Transverse colon (tissue), 4 donors: ENCODE measurements at regions of chr19 and their contacts with region 1.

Region 1: DNA sequence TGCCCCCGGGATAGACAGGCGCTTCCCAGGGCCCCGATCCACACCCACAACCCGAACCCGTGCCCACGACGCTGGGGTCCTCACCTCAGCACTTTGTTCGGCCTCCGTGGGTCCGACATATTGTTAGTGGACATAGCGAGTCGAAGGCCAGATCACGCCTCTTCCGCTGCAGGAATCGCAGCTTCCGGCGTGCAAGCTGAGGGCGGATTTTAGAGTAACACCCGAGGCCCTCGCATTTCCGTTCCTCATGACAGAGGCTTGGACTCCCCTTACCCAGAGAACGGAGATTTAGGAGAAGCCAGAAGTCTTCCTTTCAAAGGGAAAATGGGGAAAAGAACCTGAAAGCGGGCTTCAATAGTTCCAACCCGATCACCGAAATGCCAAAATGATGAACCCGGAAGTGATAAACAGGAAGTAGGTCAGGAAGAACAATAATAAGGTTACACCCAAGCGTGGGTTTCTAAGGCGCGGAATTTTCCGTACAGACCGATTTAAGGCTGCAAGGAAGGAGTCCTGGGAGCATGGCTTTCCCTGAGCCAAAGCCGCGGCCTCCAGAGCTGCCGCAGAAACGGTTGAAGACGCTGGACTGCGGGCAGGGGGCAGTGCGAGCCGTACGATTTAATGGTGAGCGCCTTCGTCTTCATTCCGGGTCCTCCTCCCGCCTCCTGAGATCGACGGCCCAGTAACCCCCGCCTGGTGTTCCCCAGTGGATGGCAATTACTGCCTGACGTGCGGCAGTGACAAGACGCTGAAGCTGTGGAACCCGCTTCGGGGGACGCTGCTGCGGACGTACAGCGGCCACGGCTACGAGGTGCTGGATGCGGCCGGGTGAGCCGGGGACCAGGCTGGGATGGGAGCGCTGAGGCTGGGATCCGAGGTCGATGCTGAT is 2.9 kb downstream of the WDR83 start:
- DNase-seq: peak; percentile 81
- H3K4me3 ChIP-seq: peak overlapping the region; percentile 66 to 90 (median 72)
- H3K27ac ChIP-seq: peak overlapping the region; percentile 90 to 95 (median 92)
- H3K4me1 ChIP-seq: peaks cover 19 to 45% (median 36%) of the 10 kb centered on the region in 4 donors
- H3K27me3 ChIP-seq: no peaks in the 10 kb centered on the region
- CTCF ChIP-seq: peak in 1 of 5 experiments; percentile 13
- EP300 ChIP-seq: no peak
- POLR2A ChIP-seq: peak; percentile 47

Region 2: GRCh38 chr19:12156223-12157058 is 513.1 kb before region 1 on chr19 and contains the start of gene ZNF625:
- in situ Hi-C with region 1: no loop called
- intact Hi-C with region 1: loop called (anchors 5 kb)
- DNase-seq: peak; percentile 83
- H3K4me3 ChIP-seq: peak within 1 kb of the TSS; percentile 64 to 91 (median 66)
- H3K27ac ChIP-seq: peak within 1 kb of the TSS; percentile 69 to 87 (median 74)
- H3K4me1 ChIP-seq: peaks cover 6 to 14% (median 7%) of the 10 kb centered on the region in 4 donors
- H3K27me3 ChIP-seq: no peaks in the 10 kb centered on the region
- CTCF ChIP-seq: no peak
- EP300 ChIP-seq: no peak
- POLR2A ChIP-seq: no peak
- total RNA-seq, gene ZNF625: 0.60 to 2.3 (median 2.2) TPM in 3 of 4 donors, not detected in the other

Region 3: GRCh38 chr19:12564016-12564664 is 105.4 kb before region 1 on chr19:
- in situ Hi-C with region 1: loop called in 3 of 4 experiments (anchors 10 kb)
- intact Hi-C with region 1: no loop called
- DNase-seq: peak; percentile 92
- H3K4me3 ChIP-seq: no peak overlapping the region
- H3K27ac ChIP-seq: peak overlapping the region in 3 of 4 donors; percentile 20 to 55 (median 52)
- H3K4me1 ChIP-seq: peaks cover 0 to 6% (median 0%) of the 10 kb centered on the region in 4 donors
- H3K27me3 ChIP-seq: no peaks in the 10 kb centered on the region
- CTCF ChIP-seq: peak; percentile 90 to 99 (median 96)
- EP300 ChIP-seq: no peak
- POLR2A ChIP-seq: no peak

Region 4: GRCh38 chr19:12574036-12574435 is 95.5 kb before region 1 on chr19:
- in situ Hi-C with region 1: loop called in 3 of 4 experiments (anchors 10 kb)
- intact Hi-C with region 1: loop called (anchors 10 kb)
- DNase-seq: peak; percentile 16
- H3K4me3 ChIP-seq: no peak overlapping the region
- H3K27ac ChIP-seq: no peak overlapping the region
- H3K4me1 ChIP-seq: no peaks in the 10 kb centered on the region
- H3K27me3 ChIP-seq: no peaks in the 10 kb centered on the region
- CTCF ChIP-seq: no peak
- EP300 ChIP-seq: no peak
- POLR2A ChIP-seq: no peak

Region 5: DNA sequence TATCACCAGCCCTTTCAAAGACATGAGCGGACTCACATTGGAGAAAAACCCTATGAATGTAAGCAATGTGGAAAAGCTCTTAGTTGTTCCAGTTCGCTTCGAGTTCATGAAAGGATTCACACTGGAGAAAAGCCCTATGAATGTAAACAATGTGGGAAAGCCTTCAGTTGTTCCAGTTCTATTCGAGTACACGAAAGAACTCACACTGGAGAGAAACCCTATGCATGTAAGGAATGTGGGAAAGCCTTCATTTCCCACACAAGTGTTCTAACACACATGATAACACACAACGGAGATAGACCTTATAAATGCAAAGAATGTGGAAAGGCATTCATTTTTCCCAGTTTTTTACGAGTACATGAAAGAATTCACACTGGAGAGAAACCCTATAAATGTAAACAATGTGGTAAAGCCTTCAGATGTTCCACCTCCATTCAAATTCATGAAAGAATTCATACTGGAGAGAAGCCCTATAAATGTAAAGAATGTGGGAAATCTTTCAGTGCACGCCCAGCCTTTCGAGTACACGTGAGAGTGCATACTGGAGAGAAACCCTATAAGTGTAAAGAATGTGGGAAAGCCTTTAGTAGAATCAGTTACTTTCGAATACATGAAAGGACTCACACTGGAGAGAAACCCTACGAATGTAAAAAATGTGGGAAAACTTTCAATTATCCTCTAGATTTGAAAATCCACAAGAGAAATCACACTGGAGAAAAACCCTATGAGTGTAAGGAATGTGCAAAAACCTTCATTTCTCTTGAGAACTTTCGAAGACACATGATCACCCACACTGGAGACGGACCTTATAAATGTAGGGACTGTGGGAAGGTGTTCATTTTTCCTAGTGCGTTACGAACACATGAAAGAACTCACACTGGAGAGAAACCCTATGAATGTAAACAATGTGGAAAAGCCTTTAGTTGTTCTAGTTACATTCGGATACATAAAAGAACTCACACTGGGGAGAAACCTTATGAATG is 41.2 kb before region 1 on chr19:
- in situ Hi-C with region 1: no loop called
- intact Hi-C with region 1: no loop called
- DNase-seq: no peak
- H3K4me3 ChIP-seq: no peak overlapping the region
- H3K27ac ChIP-seq: no peak overlapping the region
- H3K4me1 ChIP-seq: no peaks in the 10 kb centered on the region
- H3K27me3 ChIP-seq: no peaks in the 10 kb centered on the region
- CTCF ChIP-seq: no peak
- EP300 ChIP-seq: no peak
- POLR2A ChIP-seq: no peak